ENCODE measurements at regions of chr12 and their contacts with region 1.

Region 1: DNA sequence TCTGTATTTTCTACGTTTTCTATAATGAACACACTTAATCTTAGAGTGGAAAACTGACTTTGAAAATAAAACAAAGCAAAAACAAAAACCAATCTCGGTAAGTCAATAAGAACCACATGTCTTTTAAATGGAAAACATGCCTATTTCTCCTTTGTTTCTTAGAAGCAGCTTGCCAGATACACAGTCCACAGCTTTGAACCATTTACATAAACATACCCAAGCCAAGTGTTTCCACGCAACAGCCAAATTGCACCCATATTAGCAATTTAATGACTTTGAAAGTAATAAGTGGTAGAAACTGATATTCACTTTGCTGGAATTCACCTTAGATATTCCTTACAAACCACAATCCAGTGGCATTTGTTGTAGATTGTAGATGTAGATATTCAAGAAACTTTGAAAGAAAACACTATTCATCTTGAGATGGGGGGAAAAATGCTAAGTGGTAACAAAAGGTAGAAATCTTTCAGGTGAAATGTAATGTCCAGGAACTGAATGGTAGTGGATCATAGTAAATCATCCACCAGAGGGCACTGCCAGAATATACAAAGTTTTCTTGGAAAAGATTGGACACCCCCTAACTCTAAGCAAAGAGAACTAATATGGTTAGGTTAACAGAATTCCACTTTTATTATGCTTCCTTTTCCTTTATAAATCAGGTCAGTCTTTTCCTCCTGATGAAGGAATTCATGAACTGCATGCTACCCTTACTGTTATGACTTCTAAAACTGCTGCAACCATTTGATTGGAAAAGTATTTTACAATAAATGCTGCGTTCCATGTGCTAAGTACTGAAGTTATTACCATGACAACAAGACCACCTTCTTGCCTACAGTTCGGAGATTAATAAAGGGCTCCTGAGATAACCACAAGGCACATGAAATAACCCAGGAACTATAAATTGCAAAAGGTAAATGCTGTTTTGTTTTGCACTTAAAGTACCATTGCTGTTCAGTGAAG is 69.8 kb downstream of the RERG start:
- DNase-seq: peak in 1 of 5 donors; percentile 20
- ATAC-seq: peak; percentile 48 to 75 (median 60)
- H3K4me3 ChIP-seq: no peak overlapping the region
- H3K27ac ChIP-seq: peak overlapping the region in 8 of 12 donors; percentile 11 to 69 (median 46)
- H3K4me1 ChIP-seq: peaks cover 0 to 27% (median 7%) of the 10 kb centered on the region in 12 donors
- H3K27me3 ChIP-seq: no peaks in the 10 kb centered on the region
- CTCF ChIP-seq: peak; percentile 24 to 67 (median 47)
- POLR2A ChIP-seq: no peak

Region 2: GRCh38 chr12:15092826-15093225 is 58.6 kb before region 1 on chr12:
- intact Hi-C with region 1: loop called in 1 of 10 experiments (anchors 10 kb)
- DNase-seq: no peak
- ATAC-seq: no peak
- H3K4me3 ChIP-seq: no peak overlapping the region
- H3K27ac ChIP-seq: no peak overlapping the region
- H3K4me1 ChIP-seq: no peaks in the 10 kb centered on the region
- H3K27me3 ChIP-seq: no peaks in the 10 kb centered on the region
- CTCF ChIP-seq: no peak
- POLR2A ChIP-seq: no peak

Region 3: DNA sequence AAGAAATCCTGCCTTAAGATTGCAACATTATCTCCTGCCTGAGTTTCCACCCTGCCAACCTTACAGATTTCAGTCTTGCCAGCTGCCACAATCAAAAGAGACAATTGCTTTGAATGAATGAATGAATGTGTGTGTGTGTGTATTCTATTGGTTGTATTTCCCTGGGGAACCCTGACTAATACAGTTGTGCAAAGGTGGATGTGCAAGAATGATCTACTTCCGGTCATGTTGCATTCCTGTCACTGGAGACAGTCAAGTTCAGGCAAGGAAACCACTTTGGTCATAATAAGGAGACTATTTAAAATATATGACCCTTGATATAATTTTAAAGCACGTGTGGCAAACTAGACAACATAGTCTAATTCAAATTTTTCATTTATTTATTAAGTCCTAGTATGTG is 56.7 kb after region 1 on chr12:
- intact Hi-C with region 1: loop called in 1 of 10 experiments (anchors 2 kb)
- DNase-seq: no peak
- ATAC-seq: no peak
- H3K4me3 ChIP-seq: no peak overlapping the region
- H3K27ac ChIP-seq: peak overlapping the region in 8 of 12 donors; percentile 44 to 80 (median 68)
- H3K4me1 ChIP-seq: peaks cover 0 to 41% (median 0%) of the 10 kb centered on the region in 12 donors
- H3K27me3 ChIP-seq: peaks cover 0 to 5% (median 0%) of the 10 kb centered on the region in 9 donors
- CTCF ChIP-seq: peak in 4 of 12 donors; percentile 12 to 26 (median 21)
- POLR2A ChIP-seq: no peak

Region 4: GRCh38 chr12:15216036-15216794 is 64.8 kb after region 1 on chr12:
- intact Hi-C with region 1: loop called in 9 of 10 experiments (anchors 1 to 5 kb)
- DNase-seq: no peak
- ATAC-seq: no peak
- H3K4me3 ChIP-seq: no peak overlapping the region
- H3K27ac ChIP-seq: peak overlapping the region in 6 of 12 donors; percentile 14 to 85 (median 60)
- H3K4me1 ChIP-seq: peaks cover 0 to 17% (median 3%) of the 10 kb centered on the region in 12 donors
- H3K27me3 ChIP-seq: peaks cover 0 to 13% (median 0%) of the 10 kb centered on the region in 9 donors
- CTCF ChIP-seq: no peak
- POLR2A ChIP-seq: no peak

Region 5: GRCh38 chr12:15220994-15221885 is 69.8 kb after region 1 on chr12 and contains the start of gene RERG:
- intact Hi-C with region 1: loop called in 9 of 10 experiments (anchors 1 to 5 kb)
- DNase-seq: peak; percentile 78 to 92 (median 84)
- ATAC-seq: peak; percentile 84 to 100 (median 98)
- H3K4me3 ChIP-seq: peak within 1 kb of the TSS; percentile 44 to 75 (median 60)
- H3K27ac ChIP-seq: peak within 1 kb of the TSS; percentile 7 to 86 (median 80)
- H3K4me1 ChIP-seq: peaks cover 0 to 12% (median 5%) of the 10 kb centered on the region in 12 donors
- H3K27me3 ChIP-seq: peaks cover 0 to 35% (median 3%) of the 10 kb centered on the region in 9 donors
- CTCF ChIP-seq: peak; percentile 91 to 99 (median 98)
- POLR2A ChIP-seq: no peak
- total RNA-seq, gene RERG: 2.9 to 17.7 (median 4.2) TPM

Region 6: GRCh38 chr12:15368812-15369211 is 217.4 kb after region 1 on chr12:
- intact Hi-C with region 1: no loop called
- DNase-seq: no peak
- ATAC-seq: no peak
- H3K4me3 ChIP-seq: no peak overlapping the region
- H3K27ac ChIP-seq: no peak overlapping the region
- H3K4me1 ChIP-seq: no peaks in the 10 kb centered on the region
- H3K27me3 ChIP-seq: peaks cover 0 to 4% (median 0%) of the 10 kb centered on the region in 9 donors
- CTCF ChIP-seq: no peak
- POLR2A ChIP-seq: no peak

Measured in heart left ventricle (tissue), 16 donors.